K562 (cell line): ENCODE measurements at regions of chr9 and their contacts with region 1.

Region 1: DNA sequence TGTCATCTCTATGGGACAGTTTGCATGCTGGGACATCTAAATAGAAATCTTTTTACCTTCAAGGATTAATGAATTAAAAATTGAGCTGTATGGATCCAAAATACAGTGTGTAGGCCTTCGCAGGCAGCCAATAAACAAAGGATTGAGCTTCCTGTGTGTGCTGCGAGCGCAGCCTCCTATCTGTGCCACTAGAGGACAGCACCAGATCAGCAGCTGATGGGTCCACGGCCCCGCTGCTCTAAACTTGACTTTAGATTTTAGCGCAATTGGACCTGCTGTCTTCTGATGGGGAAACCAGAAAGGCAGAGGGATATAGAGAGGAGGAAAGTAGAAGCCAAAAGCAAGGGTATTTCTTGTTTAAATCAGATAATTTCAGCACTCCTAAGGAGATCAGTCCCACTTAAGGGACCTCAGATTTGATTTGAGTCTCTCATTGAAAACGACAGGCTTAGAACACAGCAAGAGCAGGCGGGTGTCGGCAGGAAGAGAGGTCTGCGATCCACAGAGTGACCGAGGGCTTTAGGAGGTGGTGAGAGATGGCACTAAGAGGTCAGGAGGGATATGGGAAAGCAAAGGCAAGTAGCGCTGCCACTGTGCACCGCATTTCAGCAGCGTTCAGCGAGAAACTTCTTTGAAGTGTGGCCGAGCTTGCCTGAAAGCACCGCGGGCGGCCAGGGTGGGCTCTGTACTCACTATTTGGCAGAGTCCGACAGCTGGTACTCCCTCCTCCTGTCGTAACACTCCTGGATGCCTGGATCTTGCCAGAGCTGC is 214.3 kb downstream of the GNA14 start:
- DNase-seq: peak; percentile 49 to 65 (median 60)
- ATAC-seq: peak; percentile 97
- H3K4me3 ChIP-seq: no peak overlapping the region
- H3K27ac ChIP-seq: no peak overlapping the region
- H3K4me1 ChIP-seq: no peaks in the 10 kb centered on the region; a peak in 1 of 5 replicates
- H3K27me3 ChIP-seq: peaks cover 5 to 35% of the 10 kb centered on the region in 2 experiments; a peak in 4 of 5 replicates
- CTCF ChIP-seq: peak; percentile 82 to 89 (median 87)
- EP300 ChIP-seq: no peak
- POLR2A ChIP-seq: no peak
- RAD21 ChIP-seq: peak; percentile 80 to 83

Region 2: DNA sequence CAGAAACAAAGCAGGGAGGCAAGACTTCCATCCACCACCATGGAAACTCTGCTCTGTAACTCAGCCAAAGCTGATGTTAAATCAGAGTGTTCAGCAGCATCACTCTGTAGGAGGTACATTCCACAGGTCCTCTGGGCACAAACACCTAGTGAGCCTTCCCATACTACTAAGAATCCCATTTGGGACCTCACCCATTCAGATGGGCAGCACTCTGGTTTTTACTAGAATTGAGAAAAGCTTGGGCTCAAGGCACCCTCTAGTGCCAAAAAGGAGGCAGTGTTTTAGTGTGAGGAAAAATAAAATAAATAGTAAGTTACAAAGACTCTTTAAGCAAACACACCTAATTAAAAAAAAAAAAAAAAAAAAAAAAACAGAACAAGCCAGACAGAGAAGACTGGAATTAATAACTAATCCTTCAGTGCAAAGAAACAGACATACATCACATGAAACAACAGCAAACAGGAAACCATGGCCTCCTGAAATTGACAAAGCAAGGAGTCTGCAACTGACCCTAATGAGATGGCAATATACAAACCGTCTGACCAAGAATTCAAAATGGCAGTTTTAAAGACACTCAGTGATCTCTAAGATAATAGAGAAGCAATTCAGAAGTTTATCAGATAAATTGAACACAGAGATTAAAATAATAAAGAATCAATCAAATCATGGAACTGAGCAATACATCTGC is 54.7 kb after region 1 on chr9:
- CTCF ChIA-PET with region 1: no interaction called
- POLR2A ChIA-PET with region 1: no interaction called
- in situ Hi-C with region 1: no loop called
- intact Hi-C with region 1: loop called (anchors 2 kb)
- DNase-seq: no peak
- ATAC-seq: peak; percentile 44; the same call in 1 of the 3 replicates
- H3K4me3 ChIP-seq: no peak overlapping the region
- H3K27ac ChIP-seq: no peak overlapping the region
- H3K4me1 ChIP-seq: no peaks in the 10 kb centered on the region
- H3K27me3 ChIP-seq: no peaks in the 10 kb centered on the region
- CTCF ChIP-seq: peak in 2 of 3 experiments; percentile 11 to 24; a peak in 1 of 6 replicates
- EP300 ChIP-seq: no peak
- POLR2A ChIP-seq: no peak
- RAD21 ChIP-seq: no peak

Region 3: GRCh38 chr9:77952642-77953328 is 518.9 kb after region 1 on chr9:
- CTCF ChIA-PET with region 1: no interaction called
- POLR2A ChIA-PET with region 1: no interaction called
- in situ Hi-C with region 1: no loop called
- intact Hi-C with region 1: no loop called
- DNase-seq: peak in 1 of 4 experiments; percentile 17
- ATAC-seq: peak; percentile 52
- H3K4me3 ChIP-seq: no peak overlapping the region
- H3K27ac ChIP-seq: no peak overlapping the region; the same call in 2 of the 3 replicates
- H3K4me1 ChIP-seq: peaks cover 5 to 38% of the 10 kb centered on the region in 2 experiments; a peak in 4 of 5 replicates
- H3K27me3 ChIP-seq: no peaks in the 10 kb centered on the region
- CTCF ChIP-seq: no peak
- EP300 ChIP-seq: no peak
- POLR2A ChIP-seq: no peak
- RAD21 ChIP-seq: no peak

Region 4: DNA sequence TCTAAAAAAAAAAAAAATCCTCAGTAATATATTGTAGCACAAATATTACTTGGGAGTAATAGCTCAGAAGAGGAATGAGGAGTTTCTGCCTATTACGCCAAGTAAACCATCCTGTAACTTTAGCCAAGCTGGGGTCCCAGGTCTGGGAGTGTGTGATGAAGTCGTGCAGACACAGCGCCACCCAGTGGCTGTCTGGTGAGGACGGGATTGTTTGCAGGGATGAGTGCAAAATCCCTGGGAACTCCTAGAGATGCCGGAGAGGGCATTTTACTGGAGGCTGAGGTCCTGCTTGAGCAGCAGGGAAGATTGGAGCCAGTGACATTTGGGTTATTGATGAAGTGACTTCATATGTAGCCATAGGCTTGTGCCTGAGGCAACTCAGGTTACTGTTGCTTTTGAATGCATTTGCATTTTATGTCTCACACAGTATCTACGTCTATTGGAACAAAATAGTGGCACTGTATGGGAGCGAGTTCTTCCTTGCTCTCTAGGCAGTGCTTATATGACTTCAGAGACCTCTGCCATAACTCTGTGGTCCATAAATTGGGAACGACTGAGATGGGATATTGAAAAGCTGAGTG is 935.9 kb after region 1 on chr9:
- CTCF ChIA-PET with region 1: no interaction called
- POLR2A ChIA-PET with region 1: no interaction called
- in situ Hi-C with region 1: loop called (anchors 25 kb)
- intact Hi-C with region 1: no loop called
- DNase-seq: peak; percentile 55 to 73 (median 62)
- ATAC-seq: peak; percentile 98
- H3K4me3 ChIP-seq: no peak overlapping the region
- H3K27ac ChIP-seq: no peak overlapping the region
- H3K4me1 ChIP-seq: no peaks in the 10 kb centered on the region; a peak in 2 of 5 replicates
- H3K27me3 ChIP-seq: peaks cover 2 to 11% of the 10 kb centered on the region in 2 experiments; a peak in 3 of 5 replicates
- CTCF ChIP-seq: peak; percentile 73 to 83 (median 74)
- EP300 ChIP-seq: no peak
- POLR2A ChIP-seq: no peak
- RAD21 ChIP-seq: peak; percentile 38 to 68